A673 (cell line): ENCODE measurements at regions of chr11 and their contacts with region 1.

Region 1: GRCh38 chr11:10735481-10736475 is 15.3 kb upstream of the CTR9 start:
- DNase-seq: peak; percentile 96
- H3K4me3 ChIP-seq: peak overlapping the region; percentile 13
- H3K27ac ChIP-seq: peak overlapping the region; percentile 77
- H3K4me1 ChIP-seq: peaks cover 22% of the 10 kb centered on the region
- H3K27me3 ChIP-seq: no peaks in the 10 kb centered on the region
- CTCF ChIP-seq: peak; percentile 98

Region 2: DNA sequence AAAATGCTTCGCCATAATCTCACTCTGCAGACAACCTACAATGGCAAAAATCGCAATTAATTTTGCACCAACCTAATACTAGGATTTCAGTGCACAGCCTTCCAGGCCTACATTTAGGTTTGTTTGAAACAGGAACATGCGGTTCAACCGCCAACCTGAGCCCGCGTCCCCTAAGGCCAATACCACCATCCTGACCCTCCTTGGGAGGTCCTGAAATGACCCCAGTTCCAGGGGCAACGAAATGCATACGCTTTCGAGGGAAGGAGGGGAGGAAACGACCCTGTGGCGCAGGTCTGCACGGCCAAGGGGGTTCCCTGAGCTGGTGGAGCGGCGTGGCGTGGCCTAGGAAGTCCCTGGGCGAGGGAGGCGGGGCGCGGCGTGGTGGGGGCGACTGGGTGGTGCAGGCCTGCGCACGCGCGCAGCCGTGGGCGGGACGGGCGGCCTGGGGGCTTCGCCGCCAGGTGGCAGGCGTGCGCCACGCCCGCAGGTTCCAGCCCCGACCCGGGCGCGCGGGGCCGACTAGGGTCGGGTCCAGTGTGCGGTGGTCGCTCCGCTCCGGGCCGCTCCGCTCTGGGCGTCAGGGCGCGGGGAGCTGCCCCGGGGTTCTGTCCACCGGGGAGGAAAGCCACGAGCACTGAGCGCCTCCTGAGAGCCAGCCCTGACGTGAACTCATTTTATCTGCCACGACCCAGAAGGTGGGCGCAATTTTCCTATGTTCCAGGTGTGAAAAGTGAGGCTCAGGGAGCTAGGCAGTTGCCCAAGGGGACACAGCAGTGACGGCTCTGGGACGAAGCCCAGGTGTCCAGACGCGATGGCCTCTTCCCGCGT is 977.8 kb before region 1 on chr11:
- CTCF ChIA-PET with region 1: no interaction called
- POLR2A ChIA-PET with region 1: no interaction called
- intact Hi-C with region 1: loop called (anchors 2 kb)
- DNase-seq: peak; percentile 85
- H3K4me3 ChIP-seq: peak overlapping the region; percentile 64
- H3K27ac ChIP-seq: peak overlapping the region; percentile 93
- H3K4me1 ChIP-seq: peaks cover 24% of the 10 kb centered on the region
- H3K27me3 ChIP-seq: no peaks in the 10 kb centered on the region
- CTCF ChIP-seq: peak; percentile 50; the same call in 1 of the 2 replicates

Region 3: DNA sequence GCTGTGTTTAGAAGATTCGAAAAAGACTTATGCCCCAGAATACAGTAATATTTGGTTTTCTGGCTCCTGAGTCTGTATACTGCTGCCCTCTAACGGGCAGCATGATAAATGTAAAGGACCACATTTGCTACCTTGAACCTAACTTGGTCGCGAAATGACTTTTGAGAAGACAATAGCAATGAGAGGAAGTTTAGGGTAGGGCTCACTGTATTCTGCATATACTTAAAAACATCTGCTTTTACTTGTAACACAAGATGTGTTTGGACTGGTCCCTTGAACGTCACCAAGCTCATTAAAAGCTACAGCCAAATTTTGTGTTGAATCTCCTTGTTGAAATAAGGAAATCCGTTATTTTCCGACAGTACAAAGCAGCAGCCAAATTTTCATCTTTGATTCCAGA is 762.8 kb before region 1 on chr11:
- CTCF ChIA-PET with region 1: no interaction called
- POLR2A ChIA-PET with region 1: no interaction called
- intact Hi-C with region 1: loop called (anchors 10 kb)
- DNase-seq: peak; percentile 68
- H3K4me3 ChIP-seq: no peak overlapping the region
- H3K27ac ChIP-seq: no peak overlapping the region
- H3K4me1 ChIP-seq: peaks cover 12% of the 10 kb centered on the region
- H3K27me3 ChIP-seq: no peaks in the 10 kb centered on the region
- CTCF ChIP-seq: peak; percentile 78

Region 4: DNA sequence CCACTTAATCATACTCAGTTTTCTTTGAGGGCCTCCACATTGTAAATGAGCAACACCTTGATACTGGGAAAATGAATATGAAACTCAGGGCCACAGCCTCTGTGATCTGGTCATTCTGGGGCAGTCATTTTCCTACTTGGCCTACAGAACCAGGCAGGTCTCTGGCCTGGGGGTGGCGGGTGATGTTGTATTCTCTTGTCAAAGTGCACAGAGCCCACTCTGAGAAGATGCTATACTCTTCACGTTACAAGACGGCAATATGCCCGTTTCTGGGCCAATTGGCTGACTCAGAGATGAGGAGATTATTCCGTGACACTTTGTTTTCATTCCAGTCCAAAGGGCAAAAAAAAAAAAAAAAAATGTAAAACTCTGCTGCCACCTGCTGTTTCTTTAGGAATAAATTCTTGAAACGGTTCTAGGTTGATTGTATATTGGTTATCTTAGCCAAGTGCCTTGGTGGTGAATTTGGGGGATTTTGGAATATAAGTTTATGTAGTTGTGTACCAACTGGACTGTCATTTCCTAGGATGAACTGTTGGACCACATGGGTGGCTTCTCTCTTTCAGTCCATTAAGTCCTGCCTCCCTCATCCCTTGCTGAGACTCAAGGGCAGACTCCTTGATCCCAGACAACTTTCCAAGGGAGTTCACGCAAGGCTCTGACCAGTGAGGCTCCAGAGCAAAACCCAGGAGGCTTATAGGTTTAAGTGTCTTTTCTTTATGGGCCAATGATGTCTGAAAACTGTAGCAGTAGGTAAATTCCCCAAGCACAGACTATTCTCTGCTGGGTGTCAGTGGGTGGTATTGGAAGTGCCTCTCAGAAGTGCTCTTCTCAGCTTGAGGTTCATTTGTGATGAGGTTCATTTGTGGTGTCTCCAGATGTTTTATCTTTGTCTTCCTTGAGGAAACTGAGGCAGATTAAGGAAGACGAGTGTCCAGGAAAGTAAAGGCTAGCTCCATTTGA is 412.7 kb before region 1 on chr11:
- CTCF ChIA-PET with region 1: no interaction called
- POLR2A ChIA-PET with region 1: no interaction called
- intact Hi-C with region 1: loop called (anchors 5 kb)
- DNase-seq: peak; percentile 84
- H3K4me3 ChIP-seq: no peak overlapping the region
- H3K27ac ChIP-seq: no peak overlapping the region
- H3K4me1 ChIP-seq: peaks cover 12% of the 10 kb centered on the region
- H3K27me3 ChIP-seq: no peaks in the 10 kb centered on the region
- CTCF ChIP-seq: peak; percentile 60

Region 5: GRCh38 chr11:10514210-10514609 is 221.6 kb before region 1 on chr11:
- CTCF ChIA-PET with region 1: no interaction called
- POLR2A ChIA-PET with region 1: no interaction called
- intact Hi-C with region 1: loop called (anchors 1 kb)
- DNase-seq: peak; percentile 36
- H3K4me3 ChIP-seq: no peak overlapping the region
- H3K27ac ChIP-seq: peak overlapping the region; percentile 43
- H3K4me1 ChIP-seq: peaks cover 34% of the 10 kb centered on the region
- H3K27me3 ChIP-seq: no peaks in the 10 kb centered on the region
- CTCF ChIP-seq: peak; percentile 46

Region 6: DNA sequence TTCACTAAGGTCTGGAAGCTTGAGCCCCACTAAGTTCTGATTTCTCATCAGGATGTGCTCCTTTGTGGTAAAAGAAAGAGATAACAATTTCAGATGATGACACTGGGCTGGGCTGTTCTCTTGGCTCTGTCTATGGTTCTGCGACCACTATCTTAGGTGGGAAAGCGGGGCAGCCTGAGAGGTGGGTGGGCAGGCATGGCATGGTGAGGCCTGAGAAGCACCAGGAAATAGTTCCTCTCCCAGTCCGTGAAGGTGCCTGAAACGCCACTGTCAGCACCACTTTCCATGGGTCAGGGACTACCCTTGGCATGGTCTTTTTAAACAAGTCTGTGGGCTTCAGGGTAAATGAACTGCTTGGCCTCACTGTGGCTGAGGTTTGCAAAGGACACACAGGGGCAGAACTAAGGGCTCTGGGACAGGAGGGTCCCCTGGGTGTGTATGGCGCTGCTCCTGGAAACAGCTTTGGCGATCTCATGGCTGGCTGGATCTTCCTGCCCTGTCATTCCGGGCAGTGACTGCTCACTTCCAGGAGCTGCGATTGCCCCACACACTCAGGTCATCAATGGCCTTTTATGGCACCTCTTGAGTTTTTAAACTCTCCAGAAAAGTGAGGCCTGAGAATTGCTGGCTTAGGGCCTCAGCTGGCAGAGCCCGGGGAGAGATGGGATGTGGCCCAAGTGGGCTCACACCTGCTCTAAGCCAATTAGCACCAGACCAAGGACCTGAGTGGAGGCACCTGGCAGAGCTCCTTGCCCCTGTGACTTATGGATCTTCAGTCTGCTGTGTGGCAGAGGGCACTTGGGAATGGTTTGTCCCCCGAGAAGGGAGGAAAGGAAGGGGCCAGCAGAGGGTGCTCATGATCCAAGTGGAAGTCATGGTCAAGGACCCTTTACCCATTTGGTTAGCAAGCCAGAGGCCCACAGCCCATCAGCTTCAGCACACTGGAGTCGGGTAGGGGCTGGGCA is 111.7 kb before region 1 on chr11:
- CTCF ChIA-PET with region 1: interaction called, 4 read pairs
- POLR2A ChIA-PET with region 1: no interaction called
- intact Hi-C with region 1: loop called (anchors 1 kb)
- DNase-seq: peak; percentile 53
- H3K4me3 ChIP-seq: no peak overlapping the region
- H3K27ac ChIP-seq: peak overlapping the region; percentile 52
- H3K4me1 ChIP-seq: peaks cover 17% of the 10 kb centered on the region
- H3K27me3 ChIP-seq: no peaks in the 10 kb centered on the region
- CTCF ChIP-seq: peak; percentile 67